GM12878 (cell line): ENCODE measurements at regions of chr10 and their contacts with region 1.

Region 1: GRCh38 chr10:117653170-117653515 is 110.6 kb downstream of the EMX2 start:
- DNase-seq: peak; percentile 98
- ATAC-seq: peak; percentile 87
- H3K4me3 ChIP-seq: no peak overlapping the region
- H3K27ac ChIP-seq: peak overlapping the region; percentile 75
- H3K4me1 ChIP-seq: peaks cover 46% of the 10 kb centered on the region
- H3K27me3 ChIP-seq: no peaks in the 10 kb centered on the region
- CTCF ChIP-seq: no peak
- EP300 ChIP-seq: peak; percentile 99
- POLR2A ChIP-seq: no peak
- RAD21 ChIP-seq: peak; percentile 17; the same call in 1 of the 2 replicates

Region 2: DNA sequence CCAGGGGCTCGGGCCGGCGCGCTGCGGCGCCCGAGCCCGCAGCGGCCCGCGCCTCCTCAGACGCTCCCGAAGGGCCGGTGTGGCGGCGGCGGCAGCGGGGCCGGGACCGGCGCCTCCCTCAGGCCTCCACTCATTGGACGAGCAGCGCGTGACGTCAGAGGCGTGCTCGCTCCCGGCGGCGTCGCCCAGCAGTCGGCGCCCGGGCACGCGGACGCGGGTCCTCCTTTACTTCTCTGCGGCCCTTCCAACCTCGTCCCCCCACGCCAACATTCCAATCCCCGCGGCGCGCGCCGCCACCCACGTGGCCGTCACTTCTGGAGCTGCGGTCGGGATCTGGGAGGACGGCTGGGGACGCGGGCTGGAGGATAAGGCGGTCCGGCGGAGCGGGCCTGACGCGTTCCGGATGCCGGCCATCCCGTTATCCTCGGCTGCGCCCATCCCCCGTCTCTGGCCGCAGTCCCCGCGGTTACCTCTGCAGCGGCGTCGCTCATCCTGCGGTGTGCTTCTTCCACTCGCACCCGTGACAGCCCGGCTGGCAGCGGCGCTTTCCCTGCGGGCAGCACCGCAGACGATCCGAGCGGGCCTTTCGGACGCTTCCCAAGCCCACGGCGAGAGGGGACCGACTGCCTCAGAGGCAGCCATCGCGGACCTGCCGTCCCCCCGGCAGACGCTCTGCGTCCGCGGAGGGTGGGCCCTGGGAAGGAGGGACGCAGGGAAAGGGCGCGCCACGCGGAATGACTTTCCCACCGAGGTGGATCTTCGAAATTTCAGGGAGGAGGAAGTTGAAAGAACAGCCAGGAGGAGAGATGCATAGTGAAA is 277.6 kb before region 1 on chr10 and contains the start of gene PDZD8:
- CTCF ChIA-PET with region 1: no interaction called
- POLR2A ChIA-PET with region 1: no interaction called
- RAD21 ChIA-PET with region 1: no interaction called
- SMC1A ChIA-PET with region 1: no interaction called
- in situ Hi-C with region 1: no loop called
- intact Hi-C with region 1: loop called (anchors 10 kb)
- DNase-seq: peak; percentile 33
- ATAC-seq: peak; percentile 83
- H3K4me3 ChIP-seq: peak within 1 kb of the TSS; percentile 84
- H3K27ac ChIP-seq: peak within 1 kb of the TSS; percentile 69
- H3K4me1 ChIP-seq: 0 out of 2 replicates have a peak, but pooled peaks cover 5% of the 10 kb centered on the region
- H3K27me3 ChIP-seq: no peaks in the 10 kb centered on the region; a peak in 1 of 4 replicates
- CTCF ChIP-seq: no peak
- EP300 ChIP-seq: no peak
- POLR2A ChIP-seq: peak; percentile 74; the same call in 1 of the 2 replicates
- RAD21 ChIP-seq: no peak
- polyA plus RNA-seq, gene PDZD8: 2.0 to 2.1 TPM

Region 3: GRCh38 chr10:117616179-117616578 is 37.0 kb before region 1 on chr10:
- CTCF ChIA-PET with region 1: interaction called, 55 read pairs
- POLR2A ChIA-PET with region 1: interaction called, 56 read pairs
- RAD21 ChIA-PET with region 1: interaction called, 138 read pairs
- SMC1A ChIA-PET with region 1: interaction called, 300 read pairs
- in situ Hi-C with region 1: no loop called
- intact Hi-C with region 1: loop called (anchors 2 kb)
- DNase-seq: peak; percentile 23
- ATAC-seq: peak; percentile 76
- H3K4me3 ChIP-seq: no peak overlapping the region
- H3K27ac ChIP-seq: no peak overlapping the region
- H3K4me1 ChIP-seq: peaks cover 7% of the 10 kb centered on the region
- H3K27me3 ChIP-seq: no peaks in the 10 kb centered on the region
- CTCF ChIP-seq: no peak
- EP300 ChIP-seq: peak in 1 of 2 experiments; percentile 78; a peak in 1 of 4 replicates
- POLR2A ChIP-seq: no peak
- RAD21 ChIP-seq: no peak

Region 4: DNA sequence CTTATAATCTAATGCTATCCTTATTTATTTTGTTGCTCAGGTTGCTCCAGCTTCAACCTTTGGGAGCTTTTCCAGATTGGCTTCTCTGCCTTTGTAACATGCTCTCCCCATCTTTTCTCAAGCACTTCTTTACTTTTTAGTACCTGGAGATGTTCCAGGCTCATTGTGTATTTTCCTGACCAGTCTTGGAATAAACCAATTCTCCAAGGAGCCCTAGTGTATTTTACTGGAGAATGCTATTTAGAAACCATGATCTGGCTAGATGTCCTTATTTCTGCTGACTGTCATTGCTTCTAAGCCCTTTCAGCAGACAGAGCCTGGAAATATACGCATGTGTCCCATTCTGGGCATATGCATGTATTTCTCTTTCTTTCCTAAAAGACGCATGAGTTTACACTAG is 14.9 kb before region 1 on chr10:
- CTCF ChIA-PET with region 1: interaction called, 6 read pairs
- POLR2A ChIA-PET with region 1: no interaction called
- RAD21 ChIA-PET with region 1: interaction called, 4 read pairs
- SMC1A ChIA-PET with region 1: interaction called, 10 read pairs
- in situ Hi-C with region 1: no loop called
- intact Hi-C with region 1: no loop called
- DNase-seq: no peak
- ATAC-seq: no peak
- H3K4me3 ChIP-seq: no peak overlapping the region
- H3K27ac ChIP-seq: no peak overlapping the region
- H3K4me1 ChIP-seq: no peaks in the 10 kb centered on the region
- H3K27me3 ChIP-seq: peaks cover 0 to 7% of the 10 kb centered on the region in 2 experiments; a peak in 1 of 4 replicates
- CTCF ChIP-seq: no peak
- EP300 ChIP-seq: no peak
- POLR2A ChIP-seq: no peak
- RAD21 ChIP-seq: no peak

Region 5: DNA sequence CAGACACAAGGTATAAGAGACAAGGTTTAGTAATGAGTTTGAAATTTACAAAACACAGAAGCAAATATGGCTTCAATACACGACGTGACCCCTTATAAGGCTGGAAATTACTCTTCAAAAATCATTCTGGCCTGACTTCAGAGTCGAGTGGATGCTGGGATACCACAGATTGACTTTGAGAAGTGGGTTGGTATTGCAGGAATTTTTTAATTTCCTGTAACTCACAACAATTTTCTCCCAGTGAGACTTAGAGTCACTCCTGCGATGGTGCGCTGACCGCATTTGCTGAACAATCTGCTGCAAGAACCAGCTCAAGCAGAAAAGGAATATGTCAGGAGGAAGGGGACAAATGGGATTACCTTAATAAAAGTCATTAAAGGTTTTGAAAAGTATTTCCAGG is 21.5 kb after region 1 on chr10:
- CTCF ChIA-PET with region 1: interaction called, 3 read pairs
- POLR2A ChIA-PET with region 1: interaction called, 5 read pairs
- RAD21 ChIA-PET with region 1: interaction called, 8 read pairs
- SMC1A ChIA-PET with region 1: interaction called, 21 read pairs
- in situ Hi-C with region 1: no loop called
- intact Hi-C with region 1: no loop called
- DNase-seq: no peak
- ATAC-seq: no peak
- H3K4me3 ChIP-seq: no peak overlapping the region
- H3K27ac ChIP-seq: no peak overlapping the region
- H3K4me1 ChIP-seq: no peaks in the 10 kb centered on the region
- H3K27me3 ChIP-seq: peaks cover 0 to 3% of the 10 kb centered on the region in 2 experiments; a peak in 1 of 4 replicates
- CTCF ChIP-seq: no peak
- EP300 ChIP-seq: no peak
- POLR2A ChIP-seq: no peak
- RAD21 ChIP-seq: no peak

Region 6: DNA sequence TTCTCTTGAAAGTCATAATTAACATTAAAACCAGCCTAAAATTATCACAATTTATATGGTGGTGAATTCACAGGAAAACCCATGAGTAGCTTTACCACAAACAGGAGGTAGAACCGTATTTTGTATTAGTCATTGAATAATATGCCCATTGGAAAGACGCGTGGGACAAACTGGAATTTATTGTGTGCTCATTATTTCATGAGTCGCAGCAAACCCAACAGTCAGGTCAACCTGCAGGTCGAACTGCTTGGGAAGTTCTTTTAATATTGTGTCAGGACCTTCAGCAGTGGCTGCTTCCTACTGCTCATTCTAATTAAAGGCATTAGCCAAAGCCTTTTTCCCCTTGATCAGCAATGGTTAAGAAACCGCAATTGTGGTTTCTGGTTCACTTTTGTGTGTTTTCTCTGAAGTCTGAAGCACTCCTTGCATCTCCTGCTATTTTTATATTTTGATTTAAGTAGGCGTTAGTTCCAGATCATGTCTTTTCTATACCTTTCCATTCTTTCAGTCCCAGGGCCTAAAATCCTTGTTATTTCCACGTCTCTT is 293.5 kb after region 1 on chr10:
- CTCF ChIA-PET with region 1: no interaction called
- POLR2A ChIA-PET with region 1: no interaction called
- RAD21 ChIA-PET with region 1: no interaction called
- SMC1A ChIA-PET with region 1: no interaction called
- in situ Hi-C with region 1: no loop called
- intact Hi-C with region 1: no loop called
- DNase-seq: no peak
- ATAC-seq: no peak
- H3K4me3 ChIP-seq: no peak overlapping the region
- H3K27ac ChIP-seq: no peak overlapping the region
- H3K4me1 ChIP-seq: no peaks in the 10 kb centered on the region
- H3K27me3 ChIP-seq: no peaks in the 10 kb centered on the region
- CTCF ChIP-seq: no peak
- EP300 ChIP-seq: no peak
- POLR2A ChIP-seq: no peak
- RAD21 ChIP-seq: no peak